ENCODE measurements at regions of chr4 and their contacts with region 1.

Region 1: GRCh38 chr4:109972786-109973528 is 60.3 kb downstream of the EGF start:
- DNase-seq: peak; percentile 63 to 76
- H3K4me3 ChIP-seq: no peak overlapping the region; the same call in 1 of the 2 replicates
- H3K4me3 Mint-ChIP-seq: peak overlapping the region; percentile 64
- H3K27ac Mint-ChIP-seq: peak overlapping the region; percentile 65
- H3K4me1 ChIP-seq: peaks cover 28% of the 10 kb centered on the region; the same call in 1 of the 2 replicates
- H3K4me1 Mint-ChIP-seq: peaks cover 26% of the 10 kb centered on the region
- H3K27me3 ChIP-seq: no peaks in the 10 kb centered on the region
- H3K27me3 Mint-ChIP-seq: no peaks in the 10 kb centered on the region
- CTCF ChIP-seq: peak in 1 of 2 experiments; percentile 30

Region 2: GRCh38 chr4:109815151-109816081 is 157.5 kb before region 1 on chr4 and contains the start of gene GAR1:
- CTCF ChIA-PET with region 1: no interaction called
- POLR2A ChIA-PET with region 1: no interaction called
- intact Hi-C with region 1: loop called (anchors 1 kb)
- DNase-seq: peak; percentile 88 to 92
- H3K4me3 ChIP-seq: peak within 1 kb of the TSS; percentile 88
- H3K4me3 Mint-ChIP-seq: peak within 1 kb of the TSS; percentile 90
- H3K27ac Mint-ChIP-seq: peak within 1 kb of the TSS; percentile 97
- H3K4me1 ChIP-seq: no peaks in the 10 kb centered on the region; the same call in 1 of the 2 replicates
- H3K4me1 Mint-ChIP-seq: peaks cover 23% of the 10 kb centered on the region
- H3K27me3 ChIP-seq: no peaks in the 10 kb centered on the region
- H3K27me3 Mint-ChIP-seq: peaks cover 2% of the 10 kb centered on the region
- CTCF ChIP-seq: no peak
- total RNA-seq, gene GAR1: 30.8 and 31.6 TPM in 2 replicates

Region 3: GRCh38 chr4:109915385-109916026 is 57.5 kb before region 1 on chr4:
- CTCF ChIA-PET with region 1: no interaction called
- POLR2A ChIA-PET with region 1: no interaction called
- intact Hi-C with region 1: loop called (anchors 2 kb)
- DNase-seq: no peak
- H3K4me3 ChIP-seq: no peak overlapping the region
- H3K4me3 Mint-ChIP-seq: no peak overlapping the region
- H3K27ac Mint-ChIP-seq: no peak overlapping the region
- H3K4me1 ChIP-seq: peaks cover 6% of the 10 kb centered on the region; the same call in 1 of the 2 replicates
- H3K4me1 Mint-ChIP-seq: peaks cover 1% of the 10 kb centered on the region
- H3K27me3 ChIP-seq: no peaks in the 10 kb centered on the region
- H3K27me3 Mint-ChIP-seq: no peaks in the 10 kb centered on the region
- CTCF ChIP-seq: no peak